HCT116 (cell line): ENCODE measurements at regions of chr2 and their contacts with region 1.

Region 1: DNA sequence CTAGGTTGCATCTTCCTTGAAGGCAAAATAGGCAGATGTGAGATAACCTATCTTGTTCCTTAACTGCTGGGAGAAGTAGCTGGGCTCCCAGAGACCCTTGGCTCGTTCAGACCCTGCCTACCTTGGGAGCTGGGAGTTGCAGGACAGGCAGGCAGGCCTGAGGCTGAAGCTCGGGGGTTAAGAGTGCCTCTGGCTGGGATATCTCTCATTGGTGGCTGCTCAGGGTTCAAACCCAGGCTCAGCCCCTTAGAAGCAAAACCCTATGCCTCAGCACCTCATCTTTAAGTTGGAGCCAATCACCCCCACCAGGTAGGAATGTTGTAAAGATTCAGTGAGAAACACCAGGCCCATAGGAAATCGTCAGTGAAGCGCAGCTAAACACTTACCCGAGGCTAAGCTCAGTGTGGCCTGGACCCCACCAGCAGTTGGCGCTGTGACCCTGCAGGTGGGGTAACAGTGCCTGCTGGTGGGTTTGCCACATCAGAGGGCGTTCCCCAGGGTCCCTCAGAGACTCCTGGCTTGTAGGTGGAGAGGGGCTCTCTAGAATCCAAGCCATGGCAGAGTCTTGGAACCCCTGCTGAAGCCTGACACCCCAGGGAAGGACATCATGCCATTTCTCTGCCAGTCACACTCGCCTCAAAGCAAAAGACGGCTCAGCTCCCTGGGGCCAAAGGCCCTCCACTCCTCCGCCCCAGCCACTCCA is 54.6 kb upstream of the GPR17 start:
- DNase-seq: peak; percentile 64
- ATAC-seq: peak; percentile 98
- H3K4me3 ChIP-seq: no peak overlapping the region
- H3K27ac ChIP-seq: no peak overlapping the region
- H3K4me1 ChIP-seq: peaks cover 0 to 8% of the 10 kb centered on the region in 2 experiments; a peak in 1 of 4 replicates
- H3K27me3 ChIP-seq: no peaks in the 10 kb centered on the region
- CTCF ChIP-seq: peak; percentile 97 to 100 (median 99)
- POLR2A ChIP-seq: no peak
- RAD21 ChIP-seq: peak; percentile 98

Region 2: GRCh38 chr2:127649684-127650040 is 58.3 kb after region 1 on chr2:
- CTCF ChIA-PET with region 1: interaction called, 97 read pairs
- POLR2A ChIA-PET with region 1: interaction called, 6 read pairs
- RAD21 ChIA-PET with region 1: interaction called, 9 to 15 read pairs
- intact Hi-C with region 1: loop called (anchors 1 kb)
- DNase-seq: peak; percentile 72
- ATAC-seq: peak; percentile 84
- H3K4me3 ChIP-seq: no peak overlapping the region
- H3K27ac ChIP-seq: no peak overlapping the region
- H3K4me1 ChIP-seq: peaks cover 9 to 31% of the 10 kb centered on the region in 2 experiments
- H3K27me3 ChIP-seq: no peaks in the 10 kb centered on the region
- CTCF ChIP-seq: peak; percentile 85 to 90 (median 87)
- POLR2A ChIP-seq: no peak
- RAD21 ChIP-seq: peak; percentile 81

Region 3: GRCh38 chr2:127675331-127676261 is 84.2 kb after region 1 on chr2 and contains the start of gene LIMS2:
- CTCF ChIA-PET with region 1: interaction called, 10 read pairs
- POLR2A ChIA-PET with region 1: no interaction called
- RAD21 ChIA-PET with region 1: no interaction called
- intact Hi-C with region 1: no loop called
- DNase-seq: no peak
- ATAC-seq: peak; percentile 72
- H3K4me3 ChIP-seq: peak within 1 kb of the TSS; percentile 43 to 59
- H3K27ac ChIP-seq: no peak within 1 kb of the TSS; the same call in 1 of the 2 replicates
- H3K4me1 ChIP-seq: peaks cover 0 to 15% of the 10 kb centered on the region in 2 experiments; a peak in 2 of 4 replicates
- H3K27me3 ChIP-seq: peaks cover 7% of the 10 kb centered on the region; the same call in 1 of the 2 replicates
- CTCF ChIP-seq: no peak
- POLR2A ChIP-seq: no peak
- RAD21 ChIP-seq: peak; percentile 37
- total RNA-seq, gene LIMS2: 3.7 TPM

Region 4: DNA sequence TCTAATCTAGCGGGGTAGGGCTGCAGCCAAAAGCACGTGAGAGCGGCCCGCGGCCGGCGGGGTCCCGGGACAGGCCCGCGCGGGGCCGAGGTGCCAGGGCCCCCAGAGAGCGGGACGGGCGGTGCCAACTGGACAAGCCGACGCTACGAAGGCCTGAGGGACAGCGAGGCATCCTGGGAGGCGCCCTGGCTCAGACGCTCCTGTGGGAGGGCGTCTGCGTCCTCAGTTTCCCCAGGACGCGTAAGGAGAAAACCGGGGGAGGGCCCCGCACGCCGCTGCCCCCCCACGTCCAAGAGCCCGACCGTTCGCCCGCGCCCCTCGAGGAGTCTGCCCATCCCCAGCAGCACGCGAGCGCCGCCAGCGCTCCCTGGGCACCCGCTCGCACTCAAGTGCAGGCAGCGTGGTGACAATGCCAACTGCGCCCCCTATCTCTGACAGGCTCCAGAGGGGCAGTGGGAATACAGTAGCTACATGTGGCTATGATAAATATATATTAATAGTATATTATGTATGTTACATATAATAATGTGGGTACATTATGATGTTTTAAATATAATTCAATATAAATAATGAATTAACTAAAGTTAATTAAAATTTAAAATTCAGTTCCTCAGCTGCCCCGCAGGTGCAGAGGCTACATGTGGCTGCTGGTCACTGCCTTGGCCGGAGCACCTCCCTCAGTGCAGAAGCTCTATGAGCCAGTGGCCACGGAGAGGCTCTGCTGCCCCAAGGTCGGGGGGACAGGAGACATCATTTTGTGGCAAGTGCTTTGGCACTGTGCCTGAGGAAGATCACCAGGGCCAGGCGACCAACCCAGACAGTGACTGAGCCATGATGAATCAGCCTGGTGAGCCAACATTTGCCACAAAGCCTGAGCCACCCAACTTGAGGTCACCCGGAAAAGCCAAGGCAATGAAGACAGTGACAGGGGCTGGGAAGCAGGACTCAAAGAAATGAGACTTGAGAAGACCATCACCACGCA is 104.4 kb after region 1 on chr2:
- CTCF ChIA-PET with region 1: interaction called, 10 read pairs
- POLR2A ChIA-PET with region 1: interaction called, 4 read pairs
- RAD21 ChIA-PET with region 1: interaction called, 3 to 4 read pairs
- intact Hi-C with region 1: loop called (anchors 2 kb)
- DNase-seq: peak; percentile 27
- ATAC-seq: peak; percentile 63
- H3K4me3 ChIP-seq: no peak overlapping the region
- H3K27ac ChIP-seq: no peak overlapping the region
- H3K4me1 ChIP-seq: peaks cover 5 to 46% of the 10 kb centered on the region in 2 experiments
- H3K27me3 ChIP-seq: no peaks in the 10 kb centered on the region
- CTCF ChIP-seq: peak; percentile 46 to 94 (median 59)
- POLR2A ChIP-seq: no peak
- RAD21 ChIP-seq: peak; percentile 64

Region 5: GRCh38 chr2:127701193-127701650 is 109.8 kb after region 1 on chr2 and contains the start of gene SFT2D3:
- CTCF ChIA-PET with region 1: interaction called, 10 read pairs
- POLR2A ChIA-PET with region 1: interaction called, 4 read pairs
- RAD21 ChIA-PET with region 1: interaction called, 3 to 4 read pairs
- intact Hi-C with region 1: loop called (anchors 2 kb)
- DNase-seq: peak; percentile 82
- ATAC-seq: peak; percentile 83
- H3K4me3 ChIP-seq: peak within 1 kb of the TSS; percentile 59 to 72
- H3K27ac ChIP-seq: peak within 1 kb of the TSS; percentile 98
- H3K4me1 ChIP-seq: peaks cover 13 to 39% of the 10 kb centered on the region in 2 experiments
- H3K27me3 ChIP-seq: no peaks in the 10 kb centered on the region
- CTCF ChIP-seq: no peak
- POLR2A ChIP-seq: peak; percentile 92
- RAD21 ChIP-seq: no peak
- total RNA-seq, gene SFT2D3: 3.1 TPM

Region 6: GRCh38 chr2:128292599-128293425 is 701.4 kb after region 1 on chr2:
- CTCF ChIA-PET with region 1: no interaction called
- POLR2A ChIA-PET with region 1: no interaction called
- RAD21 ChIA-PET with region 1: no interaction called
- intact Hi-C with region 1: no loop called
- DNase-seq: no peak
- ATAC-seq: peak; percentile 45; the same call in 1 of the 2 replicates
- H3K4me3 ChIP-seq: no peak overlapping the region
- H3K27ac ChIP-seq: no peak overlapping the region; the same call in 1 of the 2 replicates
- H3K4me1 ChIP-seq: peaks cover 0 to 12% of the 10 kb centered on the region in 2 experiments; a peak in 2 of 4 replicates
- H3K27me3 ChIP-seq: no peaks in the 10 kb centered on the region
- CTCF ChIP-seq: no peak
- POLR2A ChIP-seq: no peak
- RAD21 ChIP-seq: no peak